ENCODE measurements at regions of chr10 and their contacts with region 1.

Region 1: DNA sequence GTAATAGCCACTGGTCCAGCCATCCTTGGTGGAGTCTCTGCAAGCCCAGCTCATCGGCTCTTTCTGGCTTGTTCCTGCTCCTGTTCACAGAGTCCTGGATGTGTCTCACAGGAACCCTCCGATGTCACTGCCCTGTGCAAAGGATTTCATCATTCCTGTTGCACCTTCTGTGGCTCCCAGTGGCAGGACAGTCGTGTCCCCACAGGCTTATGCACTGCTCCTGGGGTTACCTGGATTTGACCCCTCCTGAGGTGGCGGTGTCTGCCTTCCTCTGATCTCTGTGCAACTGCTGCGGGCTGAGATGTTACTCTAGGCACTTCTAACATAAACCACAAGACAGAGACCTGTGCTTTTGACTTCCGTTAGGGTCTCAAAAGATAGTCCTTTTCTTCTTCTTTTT is 30.6 kb downstream of the APBB1IP start:
- DNase-seq: peak; percentile 64 to 79 (median 66)
- H3K4me3 ChIP-seq: peak overlapping the region in 1 of 2 donors; percentile 23
- H3K4me3 Mint-ChIP-seq: peak overlapping the region; percentile 69 to 89 (median 82)
- H3K27ac ChIP-seq: peak overlapping the region; percentile 49
- H3K27ac Mint-ChIP-seq: peak overlapping the region; percentile 61 to 94 (median 93)
- H3K4me1 ChIP-seq: peaks cover 97% of the 10 kb centered on the region
- H3K4me1 Mint-ChIP-seq: peaks cover 62 to 98% (median 78%) of the 10 kb centered on the region in 4 donors
- H3K27me3 ChIP-seq: no peaks in the 10 kb centered on the region
- H3K27me3 Mint-ChIP-seq: no peaks in the 10 kb centered on the region

Region 2: DNA sequence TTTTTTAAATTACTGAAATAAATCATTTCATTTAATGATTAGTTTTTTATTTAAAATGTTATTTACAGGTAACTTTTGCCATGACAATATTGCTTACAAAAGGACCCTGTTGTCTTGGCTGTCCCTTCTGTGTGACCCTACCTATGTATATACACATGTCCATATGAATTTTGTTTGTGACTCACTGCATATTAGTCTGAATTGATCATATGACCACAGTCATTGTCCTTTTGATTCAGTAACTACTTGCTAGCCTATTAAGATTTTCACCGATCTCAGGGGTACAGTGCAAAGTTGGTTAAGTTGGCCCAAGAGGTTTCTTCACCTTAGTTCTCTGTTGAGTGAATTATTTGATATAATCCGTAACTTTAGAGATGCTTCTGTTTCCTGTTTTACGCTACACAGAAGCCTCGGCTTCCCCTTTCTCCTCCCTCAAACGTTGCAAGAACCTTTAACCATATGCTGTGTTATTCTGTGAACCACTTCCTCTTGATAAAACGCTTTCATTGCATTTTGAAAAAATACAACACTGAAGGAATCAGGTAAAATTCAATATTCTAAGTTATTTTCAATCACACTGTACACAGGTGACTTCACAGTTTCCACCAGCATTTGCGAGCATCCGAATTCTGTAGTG is 13.3 kb after region 1 on chr10:
- CTCF ChIA-PET with region 1: interaction called, 12 read pairs
- POLR2A ChIA-PET with region 1: interaction called, 19 read pairs
- intact Hi-C with region 1: loop called (anchors 1 kb)
- DNase-seq: peak; percentile 70 to 81 (median 73)
- H3K4me3 ChIP-seq: peak overlapping the region in 1 of 2 donors; percentile 9
- H3K4me3 Mint-ChIP-seq: peak overlapping the region; percentile 36 to 88 (median 70)
- H3K27ac ChIP-seq: peak overlapping the region; percentile 51
- H3K27ac Mint-ChIP-seq: peak overlapping the region; percentile 81 to 97 (median 92)
- H3K4me1 ChIP-seq: peaks cover 96% of the 10 kb centered on the region
- H3K4me1 Mint-ChIP-seq: peaks cover 62 to 81% (median 71%) of the 10 kb centered on the region in 4 donors
- H3K27me3 ChIP-seq: no peaks in the 10 kb centered on the region
- H3K27me3 Mint-ChIP-seq: no peaks in the 10 kb centered on the region

Region 3: DNA sequence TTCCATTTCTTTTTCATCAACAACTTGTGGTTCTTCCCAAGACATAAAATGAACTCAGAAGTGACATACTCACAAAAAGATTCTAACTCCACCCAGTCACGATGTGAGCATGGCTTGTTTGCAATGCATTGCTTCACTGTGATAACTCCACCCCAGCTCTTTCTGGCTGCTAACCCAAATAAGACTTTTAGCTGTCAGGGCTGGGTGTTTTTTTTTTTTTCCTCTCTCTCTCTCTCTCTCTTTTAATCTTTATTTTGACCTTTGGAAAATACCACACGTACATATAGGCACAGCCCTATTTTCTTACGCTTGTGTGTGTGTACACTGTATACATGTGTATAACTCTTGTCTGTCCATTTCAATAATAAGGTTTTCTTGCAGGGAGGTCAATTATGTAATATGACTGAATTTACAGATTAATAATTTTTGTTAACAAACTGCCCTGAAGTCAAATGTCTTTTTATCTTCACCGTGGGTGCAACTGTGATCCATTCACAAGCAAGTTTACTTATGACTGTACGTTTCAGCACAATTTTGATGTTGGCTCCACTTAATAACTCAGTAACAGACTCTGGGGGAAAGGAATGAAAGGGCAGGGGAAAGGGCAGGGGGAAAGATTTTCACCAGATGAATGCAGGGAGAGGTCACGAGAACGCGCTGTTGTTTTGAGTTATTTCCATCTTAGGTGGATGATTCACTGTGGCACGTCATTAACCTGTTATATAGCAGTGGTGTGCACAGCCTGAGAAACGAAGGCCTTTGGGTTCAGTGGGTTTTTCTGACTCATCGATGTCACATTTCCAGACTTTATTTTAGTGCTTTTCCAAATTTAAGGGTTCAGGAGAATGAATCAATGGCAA is 18.5 kb after region 1 on chr10:
- CTCF ChIA-PET with region 1: interaction called, 12 read pairs
- POLR2A ChIA-PET with region 1: interaction called, 12 read pairs
- intact Hi-C with region 1: loop called (anchors 1 kb)
- DNase-seq: peak; percentile 58 to 91 (median 70)
- H3K4me3 ChIP-seq: peak overlapping the region in 1 of 2 donors; percentile 49
- H3K4me3 Mint-ChIP-seq: peak overlapping the region; percentile 55 to 77 (median 68)
- H3K27ac ChIP-seq: peak overlapping the region; percentile 73
- H3K27ac Mint-ChIP-seq: peak overlapping the region; percentile 94 to 97 (median 95)
- H3K4me1 ChIP-seq: peaks cover 76% of the 10 kb centered on the region
- H3K4me1 Mint-ChIP-seq: peaks cover 53 to 67% (median 58%) of the 10 kb centered on the region in 4 donors
- H3K27me3 ChIP-seq: no peaks in the 10 kb centered on the region
- H3K27me3 Mint-ChIP-seq: no peaks in the 10 kb centered on the region

Region 4: GRCh38 chr10:26503911-26504310 is 35.2 kb after region 1 on chr10:
- CTCF ChIA-PET with region 1: interaction called, 18 read pairs
- POLR2A ChIA-PET with region 1: no interaction called
- intact Hi-C with region 1: no loop called
- DNase-seq: no peak
- H3K4me3 ChIP-seq: no peak overlapping the region
- H3K4me3 Mint-ChIP-seq: no peak overlapping the region
- H3K27ac ChIP-seq: no peak overlapping the region
- H3K27ac Mint-ChIP-seq: peak overlapping the region; percentile 10 to 85 (median 66)
- H3K4me1 ChIP-seq: no peaks in the 10 kb centered on the region
- H3K4me1 Mint-ChIP-seq: peaks cover 8 to 34% (median 20%) of the 10 kb centered on the region in 4 donors
- H3K27me3 ChIP-seq: no peaks in the 10 kb centered on the region
- H3K27me3 Mint-ChIP-seq: no peaks in the 10 kb centered on the region

Region 5: GRCh38 chr10:26516540-26517101 is 47.9 kb after region 1 on chr10:
- CTCF ChIA-PET with region 1: no interaction called
- POLR2A ChIA-PET with region 1: no interaction called
- intact Hi-C with region 1: no loop called
- DNase-seq: no peak
- H3K4me3 ChIP-seq: no peak overlapping the region
- H3K4me3 Mint-ChIP-seq: no peak overlapping the region
- H3K27ac ChIP-seq: no peak overlapping the region
- H3K27ac Mint-ChIP-seq: peak overlapping the region in 1 of 7 donors; percentile 2
- H3K4me1 ChIP-seq: no peaks in the 10 kb centered on the region
- H3K4me1 Mint-ChIP-seq: peaks cover 6 to 13% (median 10%) of the 10 kb centered on the region in 4 donors
- H3K27me3 ChIP-seq: no peaks in the 10 kb centered on the region
- H3K27me3 Mint-ChIP-seq: no peaks in the 10 kb centered on the region